Tibial artery (tissue), 4 donors: ENCODE measurements at regions of chr16 and their contacts with region 1.

Region 1: GRCh38 chr16:11639925-11640899 is 28.0 kb upstream of the SNN start:
- DNase-seq: peak; percentile 91 to 96
- H3K4me3 ChIP-seq: no peak overlapping the region
- H3K27ac ChIP-seq: peak overlapping the region; percentile 86 to 87
- H3K4me1 ChIP-seq: peaks cover 5 to 25% (median 22%) of the 10 kb centered on the region in 4 donors
- H3K27me3 ChIP-seq: no peaks in the 10 kb centered on the region
- CTCF ChIP-seq: peak in 1 of 2 experiments; percentile 4

Region 2: GRCh38 chr16:11407047-11407982 is 232.9 kb before region 1 on chr16:
- intact Hi-C with region 1: loop called (anchors 2 kb)
- DNase-seq: peak; percentile 75 to 81
- H3K4me3 ChIP-seq: no peak overlapping the region
- H3K27ac ChIP-seq: no peak overlapping the region
- H3K4me1 ChIP-seq: peaks cover 0 to 14% (median 10%) of the 10 kb centered on the region in 4 donors
- H3K27me3 ChIP-seq: no peaks in the 10 kb centered on the region
- CTCF ChIP-seq: peak; percentile 63 to 86

Region 3: GRCh38 chr16:11535471-11535870 is 104.7 kb before region 1 on chr16:
- intact Hi-C with region 1: loop called (anchors 2 kb)
- DNase-seq: no peak
- H3K4me3 ChIP-seq: no peak overlapping the region
- H3K27ac ChIP-seq: no peak overlapping the region
- H3K4me1 ChIP-seq: peaks cover 0 to 13% (median 8%) of the 10 kb centered on the region in 4 donors
- H3K27me3 ChIP-seq: no peaks in the 10 kb centered on the region
- CTCF ChIP-seq: no peak

Region 4: GRCh38 chr16:11597239-11598101 is 42.7 kb before region 1 on chr16:
- intact Hi-C with region 1: loop called (anchors 5 kb)
- DNase-seq: peak in 1 of 2 donors; percentile 26
- H3K4me3 ChIP-seq: no peak overlapping the region
- H3K27ac ChIP-seq: peak overlapping the region; percentile 39 to 67
- H3K4me1 ChIP-seq: peaks cover 0 to 24% (median 10%) of the 10 kb centered on the region in 4 donors
- H3K27me3 ChIP-seq: no peaks in the 10 kb centered on the region
- CTCF ChIP-seq: no peak

Region 5: DNA sequence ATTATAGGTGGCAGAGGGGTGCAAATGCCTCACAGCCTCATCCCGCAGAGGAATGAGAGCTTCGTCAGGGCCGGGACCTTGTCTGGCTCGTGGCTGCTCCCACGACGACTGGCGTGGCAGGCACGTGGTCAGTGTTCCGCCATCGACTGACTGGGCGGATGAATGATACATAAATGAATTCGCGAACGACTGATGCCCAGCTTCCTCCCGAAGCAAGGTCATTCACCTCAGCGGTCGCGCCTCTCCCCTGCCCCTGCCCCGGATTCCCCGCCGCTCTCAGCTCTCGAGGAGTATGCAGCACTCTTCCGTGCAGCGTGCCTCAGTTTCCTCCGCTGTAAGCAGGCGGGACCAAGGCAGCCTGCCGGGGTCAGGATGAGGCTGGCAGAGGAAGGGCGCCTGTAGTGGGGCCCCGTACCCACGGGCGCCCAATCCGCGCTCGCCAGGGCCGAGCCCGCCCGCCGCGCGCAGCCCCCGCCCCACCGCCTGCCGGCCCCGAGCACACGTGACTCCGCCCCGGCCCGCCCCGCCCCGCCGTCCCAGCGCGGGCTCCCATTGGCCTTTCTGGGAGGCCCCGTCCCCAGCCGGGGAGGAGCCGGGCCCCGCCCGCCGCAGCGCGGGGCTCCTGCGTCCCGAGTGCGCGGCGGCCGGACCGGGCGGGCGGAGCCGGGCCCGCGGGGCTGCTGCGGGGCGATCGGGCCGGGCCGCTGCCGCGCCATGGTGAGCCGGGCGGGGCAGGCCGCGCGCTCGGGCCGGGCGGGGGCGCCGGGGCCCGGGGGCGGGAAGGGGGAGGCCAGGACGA is 27.8 kb after region 1 on chr16 and contains the start of gene SNN:
- intact Hi-C with region 1: no loop called
- DNase-seq: peak; percentile 78 to 93
- H3K4me3 ChIP-seq: peak within 1 kb of the TSS; percentile 92 to 98
- H3K27ac ChIP-seq: peak within 1 kb of the TSS; percentile 86 to 95
- H3K4me1 ChIP-seq: peaks cover 0 to 45% (median 42%) of the 10 kb centered on the region in 4 donors
- H3K27me3 ChIP-seq: no peaks in the 10 kb centered on the region
- CTCF ChIP-seq: no peak

Region 6: DNA sequence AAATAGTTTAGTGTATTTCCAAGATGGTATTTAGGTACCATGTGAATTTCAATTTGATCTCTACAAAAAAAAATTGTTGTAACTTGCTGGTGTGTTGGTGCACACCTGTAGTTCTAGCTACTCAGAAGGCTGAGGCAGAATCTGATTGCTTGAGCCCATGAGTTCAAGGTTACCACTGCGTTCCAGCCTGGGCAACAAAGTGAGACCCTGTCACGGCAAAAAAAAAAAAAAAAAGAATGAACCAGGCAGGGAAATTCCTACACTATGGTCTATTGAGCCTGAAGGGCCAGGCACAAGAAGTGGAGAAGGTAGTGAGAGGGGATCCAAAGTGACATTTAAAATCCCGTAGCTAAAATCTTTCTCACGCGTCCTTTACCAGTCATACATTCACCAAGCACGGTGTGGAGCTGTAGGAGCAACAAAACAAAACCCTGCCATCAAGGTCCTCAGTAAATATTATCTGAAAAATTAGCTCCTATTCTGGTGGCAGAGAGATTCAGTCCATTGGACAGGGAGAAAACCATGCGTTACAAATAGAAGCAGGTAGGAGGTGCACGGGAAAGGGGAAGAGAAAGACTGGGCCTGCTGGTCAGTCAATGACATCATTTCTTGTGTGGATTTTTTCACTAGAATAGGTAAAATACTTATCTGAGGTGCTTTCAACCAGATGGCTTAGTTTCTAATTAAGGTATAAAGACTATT is 75.2 kb after region 1 on chr16:
- intact Hi-C with region 1: loop called (anchors 10 kb)
- DNase-seq: no peak
- H3K4me3 ChIP-seq: no peak overlapping the region
- H3K27ac ChIP-seq: no peak overlapping the region
- H3K4me1 ChIP-seq: peaks cover 0 to 9% (median 2%) of the 10 kb centered on the region in 4 donors
- H3K27me3 ChIP-seq: no peaks in the 10 kb centered on the region
- CTCF ChIP-seq: no peak